GM23248 (cell line): ENCODE measurements at regions of chr17 and their contacts with region 1.

Region 1: DNA sequence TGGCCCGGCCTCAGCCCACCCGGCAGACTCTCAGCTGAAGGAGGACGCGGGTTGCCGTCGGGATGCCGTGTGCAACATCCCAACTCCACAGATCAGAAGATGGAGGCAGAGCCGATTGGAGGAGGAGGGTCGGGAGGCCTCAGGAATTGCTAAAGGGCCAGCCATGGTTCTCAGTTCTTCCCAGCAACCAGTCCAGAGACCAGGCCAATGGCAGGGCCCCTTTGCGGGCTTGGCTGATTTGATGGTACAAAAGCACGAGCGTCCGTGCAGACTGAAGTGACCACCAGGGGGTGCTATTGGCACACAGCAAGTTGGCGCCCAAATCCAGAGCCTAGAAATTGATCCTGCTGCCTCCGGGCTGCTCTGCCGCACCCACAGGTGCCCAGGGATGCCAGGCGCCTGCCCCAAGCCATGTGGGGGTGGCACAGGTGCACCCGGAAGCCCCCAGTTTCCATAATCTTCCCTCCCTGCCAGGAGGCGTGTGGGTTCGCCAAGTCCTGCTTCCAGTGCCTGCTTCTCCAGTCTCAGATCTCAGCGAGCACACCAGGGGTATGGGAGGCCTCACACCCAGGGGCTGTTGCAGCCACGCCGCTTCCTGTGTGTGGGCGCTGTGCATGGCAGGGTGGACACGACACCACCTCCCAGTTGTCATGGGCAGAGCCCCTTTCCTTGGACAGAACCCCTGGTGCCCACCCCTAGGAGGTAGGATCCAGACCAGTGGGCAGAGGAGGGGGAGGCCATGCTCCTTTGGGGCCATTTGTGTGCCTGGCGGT is 7.1 kb upstream of the TEX19 start:
- DNase-seq: peak; percentile 92
- H3K4me3 ChIP-seq: no peak overlapping the region
- H3K27ac ChIP-seq: no peak overlapping the region
- H3K4me1 ChIP-seq: peaks cover 10% of the 10 kb centered on the region
- H3K27me3 ChIP-seq: no peaks in the 10 kb centered on the region; the same call in 1 of the 2 replicates

Region 2: DNA sequence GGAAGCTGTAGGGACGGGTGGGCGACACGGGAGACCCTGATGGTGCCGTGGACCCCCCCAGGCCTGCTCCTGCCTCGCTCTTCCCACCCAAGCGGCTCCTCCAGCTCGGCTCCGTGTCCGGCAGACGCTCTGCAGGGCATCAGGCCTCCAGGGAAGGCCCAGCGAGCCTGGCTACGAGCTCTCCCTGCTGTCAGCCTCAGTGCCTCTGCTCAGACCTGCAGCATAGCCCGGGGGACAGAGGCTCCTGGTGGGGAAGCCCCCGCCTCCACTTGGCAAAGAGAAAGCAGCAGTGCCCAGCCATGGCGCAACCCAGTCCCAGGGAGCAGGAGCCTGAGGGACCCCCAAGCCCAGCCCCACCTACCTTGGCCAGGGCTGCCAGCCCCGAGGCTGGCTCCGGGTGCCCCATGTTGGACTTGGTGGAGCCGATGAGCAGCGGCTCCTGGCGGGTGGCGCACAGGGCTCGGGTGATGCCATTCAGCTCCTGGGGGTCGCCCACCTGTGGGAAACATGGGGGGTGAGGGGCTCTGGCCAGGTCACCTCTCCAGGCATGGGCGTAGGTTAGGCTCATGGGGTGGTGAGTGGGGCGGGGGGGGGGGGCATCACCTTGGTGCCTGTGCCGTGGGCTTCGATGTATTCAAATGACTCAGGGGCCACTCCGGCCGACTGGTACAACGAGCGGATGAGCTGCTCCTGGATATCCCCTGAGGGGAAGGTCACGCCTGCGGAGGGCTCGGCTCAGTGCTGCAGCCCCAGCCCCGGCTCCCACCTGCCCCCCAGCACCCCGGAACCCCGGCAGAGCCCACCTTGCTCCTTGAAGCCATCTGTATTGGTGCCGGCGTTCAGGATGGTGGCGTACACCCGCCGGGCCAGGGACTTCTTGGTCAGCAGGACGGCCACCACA is 259.6 kb before region 1 on chr17:
- in situ Hi-C with region 1: no loop called
- DNase-seq: no peak
- H3K4me3 ChIP-seq: no peak overlapping the region
- H3K27ac ChIP-seq: no peak overlapping the region
- H3K4me1 ChIP-seq: no peaks in the 10 kb centered on the region
- H3K27me3 ChIP-seq: no peaks in the 10 kb centered on the region

Region 3: GRCh38 chr17:82418001-82418986 is 66.4 kb after region 1 on chr17 and contains the starts of genes HEXD and OGFOD3:
- in situ Hi-C with region 1: loop called (anchors 10 kb)
- DNase-seq: peak; percentile 95
- H3K4me3 ChIP-seq: peak within 1 kb of the TSS; percentile 90
- H3K27ac ChIP-seq: 0 out of 2 replicates have a peak within 1 kb of the TSS, but pooled peaks have one; percentile 30
- H3K4me1 ChIP-seq: peaks cover 8% of the 10 kb centered on the region; the same call in 1 of the 2 replicates
- H3K27me3 ChIP-seq: no peaks in the 10 kb centered on the region
- total RNA-seq, gene HEXD: 5.9 and 9.7 TPM in 2 replicates
- total RNA-seq, gene OGFOD3: 34.1 and 44.7 TPM in 2 replicates